ENCODE measurements at regions of chr15 and their contacts with region 1.

Region 1: GRCh38 chr15:68875377-68876116 is 54.8 kb upstream of the SPESP1 start:
- DNase-seq: peak; percentile 91 to 95 (median 92)
- ATAC-seq: peak; percentile 90
- H3K4me3 ChIP-seq: no peak overlapping the region
- H3K27ac ChIP-seq: no peak overlapping the region
- H3K4me1 ChIP-seq: peaks cover 5% of the 10 kb centered on the region
- H3K27me3 ChIP-seq: no peaks in the 10 kb centered on the region
- CTCF ChIP-seq: peak; percentile 70 to 96 (median 94)
- POLR2A ChIP-seq: no peak

Region 2: DNA sequence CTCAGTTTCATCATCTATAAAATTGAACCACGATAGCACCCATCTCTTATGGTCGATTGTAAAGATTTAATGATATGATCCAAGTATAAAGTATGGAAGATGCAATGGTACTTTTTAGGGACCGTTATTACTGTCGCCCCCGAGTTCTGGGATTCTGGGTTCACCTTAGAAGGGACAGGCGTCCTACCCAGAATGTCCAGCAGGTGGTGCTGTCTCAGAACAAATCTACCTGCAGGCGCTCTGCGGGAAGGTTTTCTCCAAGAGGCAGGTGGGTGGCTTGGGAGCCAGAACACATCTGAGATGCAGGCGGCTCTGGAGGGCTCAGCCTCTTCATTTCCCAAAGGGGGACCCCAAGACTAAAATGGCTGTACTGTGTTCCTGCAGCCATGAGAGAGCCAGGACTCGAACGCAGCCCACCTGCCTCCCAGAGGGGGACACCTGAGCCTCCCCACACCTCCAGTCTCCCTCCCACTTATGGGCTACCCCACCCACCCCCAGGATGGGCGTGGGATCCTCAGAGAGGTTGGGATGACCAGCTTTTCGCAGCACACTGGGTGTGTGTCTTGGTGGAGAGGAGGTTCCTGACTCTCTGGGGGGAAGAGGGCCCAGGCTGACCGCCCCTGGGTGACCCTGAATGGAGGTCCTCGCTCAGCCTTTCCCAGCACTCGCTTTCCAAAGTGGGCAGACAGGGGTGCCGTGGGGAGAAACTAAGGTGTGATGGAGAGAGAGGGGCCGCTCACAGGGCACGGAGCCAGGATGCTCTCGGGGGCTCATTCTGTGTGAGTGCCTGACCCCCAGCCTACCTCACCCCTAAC is 324.9 kb before region 1 on chr15:
- intact Hi-C with region 1: loop called (anchors 5 kb)
- DNase-seq: peak; percentile 78 to 89 (median 80)
- ATAC-seq: peak; percentile 63
- H3K4me3 ChIP-seq: no peak overlapping the region
- H3K27ac ChIP-seq: no peak overlapping the region
- H3K4me1 ChIP-seq: no peaks in the 10 kb centered on the region
- H3K27me3 ChIP-seq: peaks cover 0 to 5% of the 10 kb centered on the region in 2 donors
- CTCF ChIP-seq: peak; percentile 74 to 96 (median 79)
- POLR2A ChIP-seq: no peak

Region 3: DNA sequence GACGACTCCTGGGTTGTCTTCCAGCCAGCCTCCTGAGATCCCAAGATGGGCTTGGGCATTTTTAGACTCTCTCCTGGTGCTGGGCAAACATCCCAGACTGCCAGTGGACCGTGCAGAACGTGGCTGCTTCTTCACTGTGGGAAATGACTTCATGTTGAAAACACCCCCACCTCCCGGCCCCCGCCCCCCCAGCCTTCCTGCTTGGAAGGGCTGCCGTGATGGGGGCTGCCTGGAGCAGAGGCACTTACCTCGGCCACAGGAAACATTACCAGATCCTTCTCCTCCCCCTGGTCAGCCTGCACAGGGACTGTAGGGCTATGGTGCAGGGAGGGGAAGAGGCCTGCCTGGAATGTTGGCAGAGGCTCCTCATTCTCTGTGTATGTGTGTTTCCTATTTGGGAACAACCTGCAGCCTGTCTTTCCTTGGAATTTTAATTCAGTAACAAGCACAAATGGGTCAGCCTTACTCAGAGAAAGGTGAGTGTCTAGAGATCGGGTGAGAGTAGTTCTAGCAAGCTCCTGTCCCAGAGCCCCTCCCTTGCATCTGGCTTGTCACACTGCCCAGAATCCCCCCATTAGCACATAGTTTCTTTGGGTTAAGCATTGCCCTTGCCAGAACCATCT is 145.6 kb before region 1 on chr15:
- intact Hi-C with region 1: loop called (anchors 5 kb)
- DNase-seq: no peak
- ATAC-seq: no peak
- H3K4me3 ChIP-seq: no peak overlapping the region
- H3K27ac ChIP-seq: no peak overlapping the region
- H3K4me1 ChIP-seq: no peaks in the 10 kb centered on the region
- H3K27me3 ChIP-seq: no peaks in the 10 kb centered on the region
- CTCF ChIP-seq: no peak
- POLR2A ChIP-seq: no peak

Region 4: GRCh38 chr15:68783226-68784058 is 92.1 kb before region 1 on chr15:
- intact Hi-C with region 1: loop called (anchors 10 kb)
- DNase-seq: peak; percentile 64 to 81 (median 70)
- ATAC-seq: peak; percentile 70
- H3K4me3 ChIP-seq: no peak overlapping the region
- H3K27ac ChIP-seq: no peak overlapping the region
- H3K4me1 ChIP-seq: peaks cover 13% of the 10 kb centered on the region
- H3K27me3 ChIP-seq: no peaks in the 10 kb centered on the region
- CTCF ChIP-seq: peak; percentile 51 to 70 (median 60)
- POLR2A ChIP-seq: no peak

Measured in body of pancreas (tissue), 4 donors.